Astrocyte of the spinal cord (primary cell): ENCODE measurements at regions of chr9 and their contacts with region 1.

Region 1: DNA sequence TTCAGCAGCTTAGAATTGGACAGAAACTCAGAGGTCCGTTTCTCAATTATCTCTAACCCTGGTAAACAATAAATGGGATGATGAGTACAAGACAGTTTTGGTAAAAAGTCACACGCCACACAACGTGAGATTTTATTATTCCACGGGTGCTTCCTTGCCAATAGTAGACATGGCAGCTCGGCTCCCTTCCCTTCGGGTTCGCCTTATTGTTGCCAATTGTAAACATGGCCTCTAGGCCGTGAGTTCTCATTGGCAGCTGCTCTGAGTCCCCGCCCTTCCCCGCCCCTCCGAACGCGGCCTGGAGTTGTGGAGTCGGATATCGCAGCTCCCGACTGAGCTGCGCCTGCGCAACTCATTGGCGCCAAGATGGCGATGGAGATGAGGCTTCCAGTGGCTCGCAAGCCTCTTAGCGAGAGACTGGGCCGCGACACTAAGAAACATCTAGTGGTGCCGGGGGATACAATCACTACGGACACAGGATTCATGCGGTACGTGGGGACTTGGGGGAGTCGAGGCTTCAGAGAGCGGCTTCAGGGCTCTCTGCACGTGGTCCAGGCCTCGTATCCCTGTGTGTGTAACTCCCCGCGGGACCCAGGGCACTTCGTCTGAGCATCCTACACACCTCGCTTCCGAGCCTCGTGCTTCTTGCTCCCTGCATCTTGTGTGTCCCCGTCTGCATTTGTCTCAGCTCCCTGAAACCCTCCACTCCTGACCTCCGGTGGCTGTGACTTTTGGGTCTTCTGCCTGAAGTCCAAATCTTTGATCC is at the start of gene EXOSC2:
- DNase-seq: peak; percentile 99
- H3K4me3 ChIP-seq: peak within 1 kb of the TSS; percentile 92
- CTCF ChIP-seq: no peak

Region 2: GRCh38 chr9:130866474-130866965 is 172.9 kb after region 1 on chr9:
- in situ Hi-C with region 1: loop called (anchors 25 kb)
- DNase-seq: peak; percentile 87
- H3K4me3 ChIP-seq: peak overlapping the region; percentile 39
- CTCF ChIP-seq: peak; percentile 95